MCF 10A (cell line): ENCODE measurements at regions of chr12 and their contacts with region 1.

Region 1: DNA sequence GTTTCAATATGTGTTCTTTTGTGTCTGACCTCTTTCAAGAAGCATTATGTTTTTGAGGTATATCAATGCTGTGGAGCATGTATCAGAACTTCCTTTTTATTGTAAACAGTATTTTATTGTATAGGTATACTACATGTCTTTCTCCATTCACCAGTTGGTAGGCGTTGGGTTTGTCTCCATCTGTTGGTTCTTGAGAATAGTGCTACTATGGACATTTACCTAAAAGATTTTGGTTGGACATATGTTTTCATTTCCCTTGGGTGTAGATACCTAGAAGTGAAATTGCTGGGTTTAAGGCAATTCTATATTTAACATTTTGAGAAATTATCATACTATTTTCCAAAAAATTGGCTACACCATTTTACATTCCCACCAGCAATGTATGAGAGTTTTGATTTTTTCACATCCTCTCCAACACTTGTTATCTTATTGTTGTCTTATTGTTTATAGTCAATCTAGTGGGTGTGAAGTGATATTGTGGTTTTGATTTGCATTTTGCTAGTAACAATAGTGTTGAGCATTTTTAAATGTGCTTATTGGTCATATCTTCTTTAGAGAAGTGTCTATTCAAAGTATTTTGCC is 409.2 kb downstream of the IPO8 start:
- DNase-seq: peak; percentile 59
- H3K4me3 Mint-ChIP-seq: no peak overlapping the region
- H3K27ac Mint-ChIP-seq: no peak overlapping the region
- H3K4me1 Mint-ChIP-seq: no peaks in the 10 kb centered on the region
- H3K27me3 Mint-ChIP-seq: peaks cover 19% of the 10 kb centered on the region
- CTCF ChIP-seq: peak; percentile 63

Region 2: DNA sequence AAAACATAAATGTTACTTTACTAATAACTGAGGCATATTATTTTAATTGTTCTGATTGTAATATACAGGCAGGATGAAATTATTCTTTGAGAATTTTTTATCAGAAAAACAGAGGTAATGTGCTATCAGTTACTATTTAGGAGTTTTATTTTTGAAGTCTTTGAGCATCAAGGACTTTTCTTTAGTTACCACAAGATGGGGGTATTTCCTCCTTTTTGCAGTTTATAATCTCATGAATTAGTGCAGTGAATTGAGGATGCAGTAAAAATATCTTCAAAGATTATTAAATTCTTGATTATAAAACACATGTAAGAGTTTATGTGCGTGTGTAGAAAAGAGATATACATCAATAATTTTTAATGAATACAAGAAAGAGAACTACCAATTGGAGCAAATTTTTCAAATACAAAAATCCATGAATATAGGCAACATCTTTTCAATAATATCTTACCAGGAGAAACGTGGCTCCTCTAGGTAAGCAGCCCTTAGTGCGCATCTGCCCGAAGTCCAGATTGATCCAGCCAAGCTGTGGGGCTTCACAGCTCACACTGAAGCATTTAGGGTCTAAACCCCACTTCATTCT is 977.0 kb before region 1 on chr12:
- CTCF ChIA-PET with region 1: no interaction called
- POLR2A ChIA-PET with region 1: no interaction called
- intact Hi-C with region 1: loop called (anchors 2 kb)
- DNase-seq: peak; percentile 26
- H3K4me3 Mint-ChIP-seq: no peak overlapping the region
- H3K27ac Mint-ChIP-seq: no peak overlapping the region
- H3K4me1 Mint-ChIP-seq: no peaks in the 10 kb centered on the region
- H3K27me3 Mint-ChIP-seq: no peaks in the 10 kb centered on the region
- CTCF ChIP-seq: peak; percentile 51

Region 3: DNA sequence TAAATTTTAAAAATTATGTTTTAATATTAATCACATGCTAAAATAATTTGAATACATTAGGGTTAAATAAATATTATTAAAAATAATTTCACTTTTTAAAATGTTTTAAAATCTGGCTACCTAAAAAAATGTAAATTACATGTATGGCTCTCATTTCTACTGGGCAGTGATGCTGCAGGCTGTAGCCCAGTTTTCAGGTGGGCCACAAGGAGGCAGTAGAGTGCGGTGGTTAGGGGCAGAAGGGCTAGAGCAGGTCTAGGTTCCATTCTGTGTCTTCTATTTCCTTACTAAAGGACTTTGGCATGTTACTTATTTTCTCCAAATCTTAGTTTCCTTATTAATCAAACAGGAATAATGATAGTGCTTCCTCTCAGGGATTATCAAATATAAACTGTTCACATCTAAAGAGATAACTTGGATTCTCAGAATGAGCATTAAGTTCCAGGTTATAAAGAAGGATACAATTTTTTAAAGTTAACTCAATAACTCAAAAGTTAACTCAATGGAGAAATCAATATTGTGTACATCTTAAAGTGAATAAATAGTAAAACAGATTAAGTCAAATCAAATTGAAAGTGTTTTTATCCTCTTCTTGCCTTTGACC is 734.0 kb before region 1 on chr12:
- CTCF ChIA-PET with region 1: interaction called, 3 read pairs
- POLR2A ChIA-PET with region 1: no interaction called
- intact Hi-C with region 1: loop called (anchors 1 kb)
- DNase-seq: peak; percentile 68
- H3K4me3 Mint-ChIP-seq: no peak overlapping the region
- H3K27ac Mint-ChIP-seq: no peak overlapping the region
- H3K4me1 Mint-ChIP-seq: no peaks in the 10 kb centered on the region
- H3K27me3 Mint-ChIP-seq: no peaks in the 10 kb centered on the region
- CTCF ChIP-seq: peak; percentile 89

Region 4: DNA sequence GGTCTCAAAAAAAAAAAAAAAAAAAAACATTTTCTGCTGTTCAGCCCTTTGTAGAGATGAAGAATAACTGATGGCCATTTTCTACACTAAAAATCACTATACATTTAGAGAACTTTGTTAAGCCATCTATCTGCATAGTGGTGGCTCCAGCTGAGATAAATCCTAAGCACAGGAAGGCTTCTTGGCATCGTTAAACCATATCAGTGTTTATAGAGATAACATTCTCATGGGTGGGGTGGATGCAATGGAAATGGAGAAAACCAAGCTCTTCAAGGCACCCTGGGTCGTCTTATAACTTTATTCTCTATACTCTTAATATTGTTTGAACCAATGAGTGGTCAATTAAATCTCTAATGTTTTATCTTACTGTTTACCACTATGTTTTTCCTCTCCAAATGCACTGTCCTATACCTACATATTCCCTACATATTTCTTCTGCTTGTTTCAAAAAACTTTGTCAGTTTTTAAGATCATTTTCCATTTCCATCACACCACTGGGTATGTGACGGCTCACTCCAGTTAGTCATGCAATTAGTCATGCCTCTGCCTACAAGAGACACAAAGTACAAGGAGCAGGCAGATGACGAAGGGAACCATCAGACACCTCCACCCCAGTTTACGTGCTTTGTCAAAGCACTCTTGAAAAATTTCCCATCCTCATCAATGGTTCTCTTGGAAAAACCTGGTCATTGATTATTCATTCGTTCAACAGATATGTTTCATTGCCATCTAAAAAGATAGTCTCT is 669.6 kb before region 1 on chr12:
- CTCF ChIA-PET with region 1: no interaction called
- POLR2A ChIA-PET with region 1: no interaction called
- intact Hi-C with region 1: loop called (anchors 10 kb)
- DNase-seq: peak; percentile 85
- H3K4me3 Mint-ChIP-seq: peak overlapping the region; percentile 10
- H3K27ac Mint-ChIP-seq: peak overlapping the region; percentile 94
- H3K4me1 Mint-ChIP-seq: peaks cover 32% of the 10 kb centered on the region
- H3K27me3 Mint-ChIP-seq: no peaks in the 10 kb centered on the region
- CTCF ChIP-seq: no peak

Region 5: GRCh38 chr12:30201301-30202160 is 84.9 kb before region 1 on chr12:
- CTCF ChIA-PET with region 1: no interaction called
- POLR2A ChIA-PET with region 1: no interaction called
- intact Hi-C with region 1: no loop called
- DNase-seq: no peak
- H3K4me3 Mint-ChIP-seq: no peak overlapping the region
- H3K27ac Mint-ChIP-seq: no peak overlapping the region
- H3K4me1 Mint-ChIP-seq: peaks cover 11% of the 10 kb centered on the region
- H3K27me3 Mint-ChIP-seq: peaks cover 15% of the 10 kb centered on the region
- CTCF ChIP-seq: no peak

Region 6: GRCh38 chr12:30473274-30473673 is 186.8 kb after region 1 on chr12:
- CTCF ChIA-PET with region 1: no interaction called
- POLR2A ChIA-PET with region 1: no interaction called
- intact Hi-C with region 1: no loop called
- DNase-seq: no peak
- H3K4me3 Mint-ChIP-seq: no peak overlapping the region
- H3K27ac Mint-ChIP-seq: no peak overlapping the region
- H3K4me1 Mint-ChIP-seq: no peaks in the 10 kb centered on the region
- H3K27me3 Mint-ChIP-seq: peaks cover 9% of the 10 kb centered on the region
- CTCF ChIP-seq: no peak